ENCODE measurements at regions of chr6 and their contacts with region 1.

Region 1: GRCh38 chr6:6319952-6320811 is at the start of gene F13A1:
- DNase-seq: no peak
- H3K4me3 ChIP-seq: no peak within 1 kb of the TSS
- H3K27ac ChIP-seq: no peak within 1 kb of the TSS
- H3K4me1 ChIP-seq: no peaks in the 10 kb centered on the region
- H3K27me3 ChIP-seq: no peaks in the 10 kb centered on the region
- CTCF ChIP-seq: no peak
- POLR2A ChIP-seq: no peak
- total RNA-seq, gene F13A1: 58.4 TPM

Region 2: DNA sequence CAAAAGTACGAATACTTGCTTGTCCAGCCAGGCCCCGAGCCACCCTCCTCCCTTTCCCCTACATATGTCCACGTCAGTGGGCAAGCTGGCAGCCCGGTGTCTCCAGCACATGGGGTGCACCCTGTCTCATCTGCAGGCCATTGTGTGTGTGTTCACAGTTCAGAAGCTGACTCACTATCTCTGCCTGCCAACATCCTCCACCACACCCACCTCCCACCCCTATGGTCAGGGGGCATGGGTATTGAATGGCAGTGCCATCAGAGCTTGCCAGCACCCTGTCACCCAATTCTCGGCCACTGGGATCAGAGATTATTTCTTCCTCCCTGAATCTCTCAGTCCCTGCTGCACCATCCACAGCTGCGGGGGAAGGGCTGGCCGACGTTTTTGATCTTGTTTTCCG is 863.1 kb before region 1 on chr6:
- intact Hi-C with region 1: loop called (anchors 10 kb)
- DNase-seq: no peak
- H3K4me3 ChIP-seq: no peak overlapping the region
- H3K27ac ChIP-seq: no peak overlapping the region
- H3K4me1 ChIP-seq: no peaks in the 10 kb centered on the region
- H3K27me3 ChIP-seq: no peaks in the 10 kb centered on the region
- CTCF ChIP-seq: no peak
- POLR2A ChIP-seq: no peak

Measured in vagina (tissue), 2 donors.